ENCODE measurements at regions of chr1 and their contacts with region 1.

Region 1: GRCh38 chr1:67685067-67685557 is at the start of gene GADD45A:
- DNase-seq: peak; percentile 96
- H3K4me3 Mint-ChIP-seq: peak within 1 kb of the TSS; percentile 91
- H3K27ac Mint-ChIP-seq: peak within 1 kb of the TSS; percentile 99
- H3K4me1 Mint-ChIP-seq: peaks cover 45% of the 10 kb centered on the region
- H3K27me3 Mint-ChIP-seq: no peaks in the 10 kb centered on the region
- total RNA-seq, gene GADD45A: 47.3 and 48.2 TPM in 2 replicates

Region 2: DNA sequence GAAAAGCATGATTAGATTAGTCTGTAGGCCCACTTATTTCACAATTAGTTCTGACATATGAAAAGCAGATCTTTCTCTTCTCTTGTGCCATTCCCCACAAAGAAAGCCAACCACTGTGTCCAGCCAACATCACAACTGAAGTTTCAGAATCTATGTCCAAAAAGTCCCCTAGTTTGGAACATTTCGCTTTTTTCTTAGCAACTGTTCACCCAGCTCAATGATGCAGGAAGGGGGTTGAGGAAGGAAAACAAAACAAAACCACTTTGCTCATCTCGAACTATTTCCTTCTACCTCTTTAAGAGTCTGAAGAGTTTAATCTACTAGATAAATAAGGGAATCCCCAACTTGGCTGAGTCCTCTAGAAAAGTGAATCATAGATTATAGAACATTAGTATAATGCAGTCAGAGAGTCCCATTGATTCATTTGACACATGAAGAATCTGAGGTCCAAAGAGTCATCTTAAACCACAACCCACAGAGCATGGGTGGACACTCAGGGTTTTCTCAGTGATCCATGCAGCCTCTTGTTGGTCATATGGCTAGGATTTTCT is 1310.5 kb before region 1 on chr1:
- intact Hi-C with region 1: loop called (anchors 10 kb)
- DNase-seq: peak; percentile 19
- H3K4me3 Mint-ChIP-seq: peak overlapping the region; percentile 77
- H3K27ac Mint-ChIP-seq: peak overlapping the region; percentile 96
- H3K4me1 Mint-ChIP-seq: peaks cover 69% of the 10 kb centered on the region
- H3K27me3 Mint-ChIP-seq: no peaks in the 10 kb centered on the region

Region 3: DNA sequence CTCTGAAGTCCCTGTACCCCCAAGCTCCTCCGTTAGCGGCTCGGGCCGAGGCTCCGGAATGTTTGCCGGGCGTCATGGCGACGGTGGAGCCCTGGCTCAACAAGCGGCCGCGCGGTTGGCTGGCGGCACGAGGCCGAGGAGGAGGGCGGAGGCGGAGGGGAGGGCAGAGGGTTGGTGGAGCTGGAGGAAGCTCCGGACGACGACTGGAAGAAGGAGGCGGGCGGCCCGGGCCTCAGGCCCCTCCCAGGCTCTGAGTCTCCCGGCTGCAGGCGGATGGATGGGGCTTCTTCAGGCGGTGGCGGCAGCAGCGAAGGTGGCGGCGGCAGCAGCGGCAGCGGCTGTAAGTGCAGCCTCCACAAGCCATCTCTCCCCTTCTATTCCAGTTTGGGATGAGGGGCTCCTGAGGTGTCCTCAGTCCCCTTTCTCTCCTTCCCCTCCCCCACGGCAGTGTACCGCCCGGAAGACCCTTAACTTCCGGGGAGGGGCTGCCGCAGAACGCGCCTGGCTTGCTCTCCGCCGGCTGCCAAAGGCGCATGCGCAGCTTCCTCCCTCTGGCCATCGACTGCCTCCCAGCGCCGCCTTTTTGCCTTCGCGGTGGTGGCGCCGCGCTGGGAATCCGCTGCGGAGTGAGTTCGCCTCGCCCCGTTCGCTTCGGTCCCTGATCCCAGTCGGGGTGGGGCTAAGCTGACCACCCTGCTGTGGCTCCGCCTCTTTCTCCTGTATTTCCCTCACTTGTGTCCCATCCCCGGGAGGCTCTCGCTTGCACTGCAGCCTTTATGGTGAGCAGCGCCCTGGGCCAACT is 760.2 kb before region 1 on chr1 and contains the starts of genes DNAI4 and MIER1:
- intact Hi-C with region 1: loop called (anchors 1 kb)
- DNase-seq: peak; percentile 98
- H3K4me3 Mint-ChIP-seq: peak within 1 kb of the TSS; percentile 93
- H3K27ac Mint-ChIP-seq: peak within 1 kb of the TSS; percentile 97
- H3K4me1 Mint-ChIP-seq: peaks cover 66% of the 10 kb centered on the region
- H3K27me3 Mint-ChIP-seq: no peaks in the 10 kb centered on the region
- total RNA-seq, gene DNAI4: 1.2 and 3.2 TPM in 2 replicates
- total RNA-seq, gene MIER1: 53.2 and 57.4 TPM in 2 replicates

Region 4: DNA sequence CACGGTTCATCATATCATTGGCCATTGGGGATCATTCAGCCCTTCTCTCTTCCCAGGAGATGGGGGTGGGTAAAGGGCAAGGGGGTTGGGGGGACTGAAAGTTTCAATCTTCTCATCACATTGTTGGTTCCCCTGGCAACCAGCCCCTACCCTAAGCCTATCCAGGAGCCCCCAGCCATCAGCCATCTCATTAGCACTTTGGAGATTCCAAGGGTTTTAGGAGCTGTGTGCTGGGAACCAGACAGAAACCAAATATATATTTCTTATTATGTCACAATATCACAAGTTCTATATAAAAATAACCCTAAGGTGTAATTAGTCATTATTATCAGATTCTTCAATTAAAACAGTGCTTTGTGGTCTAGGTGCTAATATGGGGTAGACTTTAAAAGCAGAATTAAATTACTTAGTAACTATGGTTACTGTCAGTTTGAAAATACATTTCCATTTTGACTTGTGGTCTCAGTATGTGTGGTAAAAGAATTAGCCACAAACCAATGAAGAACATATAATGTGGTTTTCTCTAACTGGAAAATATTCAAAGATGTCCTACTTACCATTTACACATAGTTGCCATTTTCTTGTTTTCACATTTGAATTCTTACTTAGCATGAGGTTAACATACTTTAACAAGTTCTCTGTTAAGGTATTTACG is 490.8 kb before region 1 on chr1:
- intact Hi-C with region 1: loop called (anchors 1 kb)
- DNase-seq: no peak
- H3K4me3 Mint-ChIP-seq: no peak overlapping the region
- H3K27ac Mint-ChIP-seq: no peak overlapping the region
- H3K4me1 Mint-ChIP-seq: peaks cover 38% of the 10 kb centered on the region
- H3K27me3 Mint-ChIP-seq: no peaks in the 10 kb centered on the region

Region 5: GRCh38 chr1:67332653-67333529 is 352.2 kb before region 1 on chr1:
- intact Hi-C with region 1: loop called (anchors 1 kb)
- DNase-seq: peak; percentile 64
- H3K4me3 Mint-ChIP-seq: peak overlapping the region; percentile 27
- H3K27ac Mint-ChIP-seq: peak overlapping the region; percentile 99
- H3K4me1 Mint-ChIP-seq: peaks cover 77% of the 10 kb centered on the region
- H3K27me3 Mint-ChIP-seq: no peaks in the 10 kb centered on the region

Region 6: GRCh38 chr1:67674260-67675011 is 10.7 kb before region 1 on chr1:
- intact Hi-C with region 1: loop called (anchors 1 kb)
- DNase-seq: peak; percentile 16
- H3K4me3 Mint-ChIP-seq: peak overlapping the region; percentile 47
- H3K27ac Mint-ChIP-seq: peak overlapping the region; percentile 2
- H3K4me1 Mint-ChIP-seq: peaks cover 26% of the 10 kb centered on the region
- H3K27me3 Mint-ChIP-seq: peaks cover 26% of the 10 kb centered on the region

Region 7: DNA sequence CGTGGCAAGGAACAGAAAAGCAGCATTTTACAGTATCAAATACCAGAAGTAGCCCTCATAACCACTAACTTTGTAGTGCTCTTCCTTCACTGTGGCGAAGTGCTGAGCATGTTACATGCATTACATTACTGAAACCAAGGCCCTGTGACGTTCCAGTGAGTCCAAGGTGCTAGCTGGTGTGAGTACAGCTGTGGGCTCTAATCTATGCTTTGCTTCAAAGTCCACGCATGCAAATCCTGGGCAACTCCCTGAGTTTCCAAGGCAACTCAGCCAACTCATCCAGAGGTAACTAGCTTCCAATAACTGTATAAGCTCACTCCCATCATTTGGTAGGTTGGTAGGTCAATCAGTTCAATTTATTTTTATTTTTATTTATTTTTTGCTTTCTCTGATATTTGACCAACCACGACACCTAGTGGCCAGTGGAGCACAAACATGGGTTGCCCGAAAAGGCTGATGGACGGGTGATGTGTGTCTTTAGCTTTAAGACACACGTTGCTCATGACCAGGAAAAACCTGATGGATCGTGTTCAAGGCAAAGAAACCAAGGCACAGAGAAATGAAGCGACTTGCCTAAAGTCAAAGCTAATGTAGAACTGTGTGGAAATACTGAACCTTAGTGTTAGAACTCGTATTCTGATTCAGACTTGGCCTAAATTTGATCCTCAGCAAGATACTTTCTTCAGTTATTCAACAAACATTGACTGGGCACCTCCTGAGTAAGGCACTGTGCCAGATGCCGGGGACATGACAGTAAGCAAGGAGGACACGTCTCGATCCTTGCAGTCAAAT is 75.1 kb after region 1 on chr1:
- intact Hi-C with region 1: loop called (anchors 1 kb)
- DNase-seq: peak; percentile 19
- H3K4me3 Mint-ChIP-seq: no peak overlapping the region
- H3K27ac Mint-ChIP-seq: no peak overlapping the region
- H3K4me1 Mint-ChIP-seq: no peaks in the 10 kb centered on the region
- H3K27me3 Mint-ChIP-seq: peaks cover 27% of the 10 kb centered on the region